ENCODE measurements at regions of chr5 and their contacts with region 1.

Region 1: DNA sequence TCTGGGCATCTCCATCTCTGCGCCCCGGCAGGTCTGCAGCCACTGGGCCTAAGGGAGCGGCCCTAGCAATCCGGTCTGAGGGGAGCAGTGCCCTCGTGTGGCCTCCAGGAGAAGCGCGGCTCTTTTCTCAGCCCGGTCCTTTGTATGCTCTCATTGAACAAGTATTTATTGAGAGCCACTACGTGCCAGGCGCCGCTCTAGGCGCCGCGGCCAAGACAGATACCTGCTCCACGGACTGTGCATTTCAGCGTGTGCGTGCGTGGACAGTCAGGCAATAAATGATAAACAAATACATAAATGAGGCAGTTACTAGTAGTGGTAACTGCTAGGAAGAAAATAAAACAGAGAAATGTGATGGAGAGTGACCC is 2.3 kb upstream of the SLC4A9 start:
- DNase-seq: peak; percentile 78 to 88 (median 82)
- ATAC-seq: peak; percentile 82 to 94 (median 94)
- H3K4me3 ChIP-seq: peak overlapping the region in 7 of 12 donors; percentile 3 to 36 (median 10)
- H3K27ac ChIP-seq: peak overlapping the region in 1 of 12 donors; percentile 0
- H3K4me1 ChIP-seq: peaks cover 0 to 16% (median 7%) of the 10 kb centered on the region in 12 donors
- H3K27me3 ChIP-seq: no peaks in the 10 kb centered on the region
- CTCF ChIP-seq: peak; percentile 84 to 97 (median 90)
- POLR2A ChIP-seq: no peak

Region 2: DNA sequence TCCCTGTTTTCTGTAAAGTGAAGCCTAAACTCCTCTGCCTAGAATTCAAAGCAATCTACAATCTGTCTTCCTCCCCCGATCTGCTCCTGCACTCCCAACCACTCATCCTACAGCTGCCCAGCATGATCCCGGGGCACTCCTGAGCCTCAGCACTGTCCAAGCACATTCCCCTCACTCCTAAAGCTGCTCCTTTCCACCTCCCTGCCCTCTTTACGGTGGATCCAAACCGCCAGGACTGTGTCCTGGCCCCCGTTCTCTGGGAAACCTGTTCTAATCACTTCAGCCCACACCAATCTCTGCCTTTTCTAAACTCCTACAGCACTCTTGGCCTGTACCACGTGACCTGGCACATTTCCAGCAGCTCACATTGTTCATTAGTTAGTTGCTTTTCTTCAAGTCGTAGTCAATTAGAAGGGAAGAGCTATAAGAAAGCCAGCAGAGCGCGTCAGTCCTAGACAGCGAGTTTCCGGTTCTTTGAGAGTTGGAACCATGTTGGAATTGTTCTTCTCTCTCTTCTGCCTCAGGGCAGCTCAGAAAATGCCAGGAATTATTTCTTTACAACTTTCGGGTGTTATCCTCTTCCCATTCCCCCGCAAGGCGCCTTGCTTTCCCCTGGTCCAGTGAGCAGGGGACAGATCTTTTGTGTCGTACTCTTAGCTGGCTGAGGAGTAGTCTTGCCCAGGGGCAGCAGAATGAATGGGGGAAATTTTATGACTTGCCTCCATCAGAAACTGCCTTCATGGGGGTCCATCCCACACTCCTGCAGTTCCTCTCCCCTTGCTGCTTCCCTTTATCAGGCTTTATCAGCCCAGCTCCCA is 375.3 kb before region 1 on chr5:
- intact Hi-C with region 1: no loop called
- DNase-seq: peak in 3 of 5 donors; percentile 46 to 65 (median 59)
- ATAC-seq: peak in 1 of 4 donors; percentile 7
- H3K4me3 ChIP-seq: no peak overlapping the region
- H3K27ac ChIP-seq: no peak overlapping the region
- H3K4me1 ChIP-seq: peaks cover 0 to 53% (median 20%) of the 10 kb centered on the region in 12 donors
- H3K27me3 ChIP-seq: no peaks in the 10 kb centered on the region
- CTCF ChIP-seq: no peak
- POLR2A ChIP-seq: no peak

Region 3: DNA sequence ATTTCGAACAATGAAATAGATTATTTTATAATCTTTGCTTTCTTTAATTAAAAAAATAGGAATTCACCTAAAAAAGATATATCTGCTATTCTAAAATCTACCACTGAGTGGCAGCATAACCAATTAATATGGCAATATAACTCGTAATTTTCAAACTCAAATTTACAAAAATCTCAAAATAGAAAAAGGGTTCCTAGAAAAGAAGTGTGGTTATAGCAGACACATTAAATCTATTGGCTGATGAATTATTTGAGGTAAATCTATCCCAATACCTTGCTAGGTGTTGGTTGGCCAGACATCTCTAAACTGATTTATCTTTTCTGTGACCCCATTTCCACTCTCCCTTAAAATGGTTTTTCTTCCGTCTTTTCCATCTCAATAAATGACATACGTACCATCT is 284.4 kb before region 1 on chr5:
- intact Hi-C with region 1: loop called in 4 of 10 experiments (anchors 10 kb)
- DNase-seq: no peak
- ATAC-seq: no peak
- H3K4me3 ChIP-seq: peak overlapping the region in 2 of 12 donors; percentile 2 to 10
- H3K27ac ChIP-seq: no peak overlapping the region
- H3K4me1 ChIP-seq: peaks cover 0 to 3% (median 0%) of the 10 kb centered on the region in 12 donors
- H3K27me3 ChIP-seq: peaks cover 0 to 4% (median 0%) of the 10 kb centered on the region in 9 donors
- CTCF ChIP-seq: peak; percentile 47 to 83 (median 74)
- POLR2A ChIP-seq: no peak

Region 4: DNA sequence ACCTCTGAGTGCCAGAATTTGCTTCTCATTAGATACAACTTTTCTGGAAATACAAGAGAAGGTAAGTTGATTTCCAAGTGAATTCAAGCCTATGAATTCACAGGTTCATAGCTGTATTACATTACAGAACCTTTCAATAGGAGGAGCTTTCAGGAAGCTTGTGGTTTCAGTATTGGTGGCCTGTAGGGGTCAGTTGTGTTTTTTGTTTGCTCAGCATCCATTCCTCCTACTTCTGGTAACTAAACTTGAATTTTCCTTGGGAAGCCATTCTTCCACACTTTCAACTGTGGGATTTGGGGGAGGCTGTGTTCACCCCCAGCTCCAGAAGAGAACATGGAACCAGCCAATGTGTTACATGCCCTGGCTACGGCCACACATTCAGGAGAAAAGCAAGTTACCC is 188.3 kb before region 1 on chr5:
- intact Hi-C with region 1: loop called in 4 of 10 experiments (anchors 2 to 5 kb)
- DNase-seq: no peak
- ATAC-seq: no peak
- H3K4me3 ChIP-seq: no peak overlapping the region
- H3K27ac ChIP-seq: no peak overlapping the region
- H3K4me1 ChIP-seq: peaks cover 0 to 18% (median 8%) of the 10 kb centered on the region in 12 donors
- H3K27me3 ChIP-seq: no peaks in the 10 kb centered on the region
- CTCF ChIP-seq: peak in 7 of 12 donors; percentile 11 to 36 (median 22)
- POLR2A ChIP-seq: no peak

Region 5: DNA sequence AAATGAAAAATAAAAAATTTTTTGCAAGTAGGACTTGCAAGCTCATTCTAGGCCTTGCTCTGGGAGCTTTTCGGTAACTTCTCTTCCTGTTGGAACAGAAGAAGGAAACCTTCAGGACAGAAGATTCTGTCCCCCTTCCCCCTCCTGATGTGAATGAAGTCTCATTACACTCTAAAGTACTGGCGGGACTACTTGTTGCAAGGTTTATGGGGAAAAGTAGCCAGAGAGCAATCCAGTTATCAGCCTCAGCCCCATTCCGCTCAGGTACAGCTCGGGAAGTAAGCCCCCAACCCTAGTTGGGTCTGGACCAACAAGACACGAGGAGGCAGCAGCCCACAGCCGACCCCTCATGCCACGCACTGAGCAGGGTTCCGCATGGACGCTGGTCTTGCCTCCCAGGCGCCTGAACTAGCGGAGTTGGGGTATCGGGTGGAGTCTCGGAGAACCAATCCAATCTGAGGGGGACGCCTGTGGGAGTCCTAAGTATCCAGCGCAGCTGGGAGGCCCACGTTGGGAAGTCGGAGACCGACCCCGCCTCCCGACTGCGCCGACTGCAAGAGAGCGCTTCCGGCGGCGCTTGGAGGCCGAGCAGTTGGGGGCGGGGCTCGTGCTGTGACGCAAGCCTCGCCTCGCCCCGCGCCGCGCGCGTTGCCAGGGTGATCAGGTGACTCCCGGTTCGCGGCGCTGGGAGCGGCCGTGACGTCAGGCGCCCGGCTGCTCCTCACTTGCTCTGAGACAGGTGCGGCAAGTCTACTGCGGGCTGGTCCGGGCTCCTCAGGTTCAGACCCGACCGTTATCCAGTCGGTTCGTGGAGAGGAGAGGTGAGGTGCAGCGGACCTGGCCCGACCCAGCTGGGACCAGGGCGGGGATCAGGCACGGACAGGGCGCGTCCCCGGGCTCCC is 183.0 kb before region 1 on chr5 and contains the start of gene CYSTM1:
- intact Hi-C with region 1: loop called in 4 of 10 experiments (anchors 2 to 5 kb)
- DNase-seq: peak; percentile 96 to 98 (median 98)
- ATAC-seq: peak; percentile 89 to 96 (median 94)
- H3K4me3 ChIP-seq: peak within 1 kb of the TSS; percentile 78 to 100 (median 92)
- H3K27ac ChIP-seq: peak within 1 kb of the TSS; percentile 86 to 100 (median 98)
- H3K4me1 ChIP-seq: peaks cover 0 to 42% (median 26%) of the 10 kb centered on the region in 12 donors
- H3K27me3 ChIP-seq: no peaks in the 10 kb centered on the region
- CTCF ChIP-seq: peak in 1 of 12 donors; percentile 15
- POLR2A ChIP-seq: peak in 1 of 2 donors; percentile 91
- total RNA-seq, gene CYSTM1: 58.1 to 222 (median 94.5) TPM

Measured in heart left ventricle (tissue), 16 donors.